ENCODE measurements at regions of chr13 and their contacts with region 1.

Region 1: DNA sequence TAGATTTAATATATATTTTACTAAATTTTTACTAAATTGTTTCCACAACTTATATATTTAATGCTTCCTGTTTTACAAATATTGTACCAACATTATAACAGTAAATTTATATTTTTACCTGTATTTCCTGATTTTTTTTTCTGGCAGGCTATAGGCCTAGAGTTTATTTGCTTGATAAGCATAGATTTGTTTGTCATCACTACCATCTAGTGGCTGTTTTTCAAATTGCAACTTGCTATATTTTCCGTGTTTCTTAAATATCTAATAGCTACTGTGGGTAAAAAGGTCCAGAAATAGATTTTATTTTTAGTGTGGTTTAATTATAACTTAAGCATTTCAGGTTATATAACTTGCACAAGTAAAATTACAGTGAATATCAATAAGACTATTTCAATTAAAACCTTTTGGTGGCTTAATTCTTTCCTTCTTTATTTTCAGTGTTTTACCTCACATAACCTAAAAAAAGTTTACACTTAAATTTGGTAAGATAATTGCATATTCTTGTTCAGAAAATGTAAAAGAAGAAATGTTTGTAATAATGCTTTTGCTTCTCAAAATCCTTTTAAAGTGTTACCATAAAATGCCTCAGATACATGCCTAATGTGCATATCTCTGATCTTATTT is 60.6 kb downstream of the NDFIP2 start:
- DNase-seq: peak in 7 of 9 donors; percentile 36 to 70 (median 59)
- ATAC-seq: peak; percentile 74
- H3K4me3 ChIP-seq: no peak overlapping the region
- H3K4me3 Mint-ChIP-seq: no peak overlapping the region
- H3K27ac ChIP-seq: no peak overlapping the region
- H3K27ac Mint-ChIP-seq: no peak overlapping the region
- H3K4me1 ChIP-seq: no peaks in the 10 kb centered on the region
- H3K4me1 Mint-ChIP-seq: peaks cover 0 to 20% (median 0%) of the 10 kb centered on the region in 7 donors
- H3K27me3 ChIP-seq: no peaks in the 10 kb centered on the region
- H3K27me3 Mint-ChIP-seq: no peaks in the 10 kb centered on the region

Region 2: DNA sequence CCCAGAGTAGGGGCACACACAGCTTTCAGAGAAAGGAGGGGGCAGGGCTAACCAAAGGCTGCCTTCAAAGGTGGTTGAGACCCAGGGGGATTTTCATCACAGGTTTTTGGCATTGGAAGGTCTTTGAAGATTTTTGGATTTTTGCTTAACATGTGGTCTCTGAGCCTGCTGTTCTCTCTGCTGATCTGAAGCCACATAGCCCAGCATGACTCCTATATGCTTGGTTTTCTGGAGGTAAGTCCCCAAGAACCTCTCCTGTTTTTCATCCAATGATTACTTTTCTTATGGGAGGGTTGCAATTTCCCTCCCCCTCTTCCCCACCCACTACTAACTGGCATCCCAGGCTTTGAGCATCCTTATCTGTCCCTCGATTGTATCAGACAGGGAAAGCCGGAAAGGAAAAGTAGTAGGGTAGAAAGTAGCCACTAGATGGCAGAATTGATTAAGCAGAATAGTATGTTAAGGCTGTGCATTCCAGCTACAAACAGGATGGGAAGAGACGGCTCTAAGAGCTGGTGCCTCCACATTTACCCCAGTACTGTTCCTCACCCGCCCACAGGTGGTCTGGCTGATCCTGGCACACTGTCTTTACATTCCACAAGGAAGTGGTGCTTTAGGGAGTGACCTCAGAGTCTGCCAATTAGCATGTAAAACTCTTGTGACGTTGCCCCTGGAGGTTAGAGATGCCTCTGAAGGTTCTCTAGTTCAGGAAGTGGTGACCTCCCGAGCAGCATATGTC is 1404.0 kb before region 1 on chr13:
- CTCF ChIA-PET with region 1: interaction called, 14 read pairs
- POLR2A ChIA-PET with region 1: no interaction called
- intact Hi-C with region 1: loop called in 1 of 2 experiments (anchors 1 kb)
- DNase-seq: peak in 7 of 9 donors; percentile 7 to 41 (median 28)
- ATAC-seq: peak; percentile 76
- H3K4me3 ChIP-seq: no peak overlapping the region
- H3K4me3 Mint-ChIP-seq: peak overlapping the region in 9 of 10 donors; percentile 11 to 67 (median 42)
- H3K27ac ChIP-seq: no peak overlapping the region
- H3K27ac Mint-ChIP-seq: no peak overlapping the region
- H3K4me1 ChIP-seq: no peaks in the 10 kb centered on the region
- H3K4me1 Mint-ChIP-seq: peaks cover 3 to 7% (median 6%) of the 10 kb centered on the region in 7 donors
- H3K27me3 ChIP-seq: no peaks in the 10 kb centered on the region
- H3K27me3 Mint-ChIP-seq: peaks cover 0 to 4% (median 0%) of the 10 kb centered on the region in 5 donors

Region 3: DNA sequence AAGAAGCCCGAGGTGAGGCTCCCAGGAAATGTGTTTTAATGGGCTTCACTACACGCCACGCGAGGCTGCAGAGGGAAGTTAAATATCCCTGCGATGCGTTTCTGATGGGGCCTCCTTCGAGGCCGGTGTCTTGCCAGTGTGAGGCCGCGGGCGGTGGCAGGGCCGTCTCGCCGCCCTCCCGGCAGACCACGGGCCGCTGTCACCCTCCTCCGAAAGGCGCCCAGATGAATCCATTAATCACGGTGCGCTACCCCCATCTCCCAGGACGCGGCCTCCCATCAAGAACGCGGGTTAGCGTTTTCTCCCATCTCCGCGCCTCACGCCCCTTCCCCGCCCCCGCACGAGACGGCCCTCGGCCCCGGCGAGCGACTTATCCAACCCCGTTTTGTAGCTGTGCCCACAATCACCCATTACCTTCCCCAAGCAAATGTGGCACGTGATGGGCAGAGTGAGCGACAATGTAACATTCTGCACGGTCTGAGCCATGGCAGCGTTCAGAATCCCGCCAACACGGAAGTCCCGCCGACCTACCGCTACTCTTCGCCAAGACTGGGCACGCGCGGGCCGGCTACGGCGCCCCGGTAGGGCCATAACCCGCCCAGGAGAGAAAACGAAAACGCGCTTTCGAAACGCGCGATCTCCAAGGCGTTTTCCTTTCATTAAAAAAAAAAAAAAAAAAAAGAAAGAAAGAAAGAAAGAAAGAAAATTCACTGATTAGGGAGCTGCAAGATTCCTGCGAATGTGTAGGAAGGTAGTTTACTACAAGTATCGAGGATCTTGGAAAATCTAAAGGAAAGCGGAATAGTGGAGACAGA is 882.7 kb before region 1 on chr13 and contains the start of gene OBI1:
- CTCF ChIA-PET with region 1: no interaction called
- POLR2A ChIA-PET with region 1: no interaction called
- intact Hi-C with region 1: loop called in 1 of 2 experiments (anchors 10 kb)
- DNase-seq: peak; percentile 84 to 94 (median 90)
- ATAC-seq: peak; percentile 99
- H3K4me3 ChIP-seq: peak within 1 kb of the TSS; percentile 94
- H3K4me3 Mint-ChIP-seq: peak within 1 kb of the TSS; percentile 91 to 100 (median 98)
- H3K27ac ChIP-seq: peak within 1 kb of the TSS; percentile 71
- H3K27ac Mint-ChIP-seq: peak within 1 kb of the TSS; percentile 91 to 98 (median 95)
- H3K4me1 ChIP-seq: peaks cover 10 to 11% of the 10 kb centered on the region in 2 donors
- H3K4me1 Mint-ChIP-seq: peaks cover 22 to 55% (median 47%) of the 10 kb centered on the region in 7 donors
- H3K27me3 ChIP-seq: no peaks in the 10 kb centered on the region
- H3K27me3 Mint-ChIP-seq: no peaks in the 10 kb centered on the region
- total RNA-seq, gene OBI1: 4.2 to 17.7 (median 15.9) TPM

Region 4: DNA sequence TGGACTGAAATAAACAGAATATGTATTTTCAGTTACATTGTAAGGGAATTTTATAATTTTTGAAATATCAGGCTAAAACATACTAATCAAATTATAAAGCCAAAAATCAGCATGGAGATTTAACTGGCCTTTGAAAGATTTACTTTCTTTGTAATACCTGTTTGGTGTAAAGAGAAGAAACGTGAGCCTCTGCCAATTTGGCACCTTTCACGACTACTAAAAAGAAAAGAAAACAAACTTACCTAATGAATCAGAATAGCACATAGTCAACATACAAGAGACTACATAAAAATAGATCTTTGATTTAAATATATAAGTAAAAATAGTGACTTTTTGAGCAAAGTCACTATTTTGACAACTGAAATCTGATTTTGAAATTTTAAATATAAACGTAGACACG is 222.9 kb before region 1 on chr13:
- CTCF ChIA-PET with region 1: no interaction called
- POLR2A ChIA-PET with region 1: no interaction called
- intact Hi-C with region 1: loop called in 1 of 2 experiments (anchors 1 kb)
- DNase-seq: no peak
- ATAC-seq: no peak
- H3K4me3 ChIP-seq: no peak overlapping the region
- H3K4me3 Mint-ChIP-seq: no peak overlapping the region
- H3K27ac ChIP-seq: no peak overlapping the region
- H3K27ac Mint-ChIP-seq: peak overlapping the region in 1 of 9 donors; percentile 35
- H3K4me1 ChIP-seq: no peaks in the 10 kb centered on the region
- H3K4me1 Mint-ChIP-seq: peaks cover 0 to 8% (median 4%) of the 10 kb centered on the region in 7 donors
- H3K27me3 ChIP-seq: no peaks in the 10 kb centered on the region
- H3K27me3 Mint-ChIP-seq: no peaks in the 10 kb centered on the region

Region 5: GRCh38 chr13:79405829-79406596 is 135.5 kb before region 1 on chr13 and contains the start of gene RBM26:
- CTCF ChIA-PET with region 1: interaction called, 3 read pairs
- POLR2A ChIA-PET with region 1: no interaction called
- intact Hi-C with region 1: loop called (anchors 1 kb)
- DNase-seq: peak; percentile 87 to 96 (median 93)
- ATAC-seq: peak; percentile 92
- H3K4me3 ChIP-seq: peak within 1 kb of the TSS; percentile 93
- H3K4me3 Mint-ChIP-seq: peak within 1 kb of the TSS in 5 of 10 donors; percentile 93 to 97 (median 95)
- H3K27ac ChIP-seq: peak within 1 kb of the TSS; percentile 91
- H3K27ac Mint-ChIP-seq: peak within 1 kb of the TSS in 5 of 9 donors; percentile 97 to 99 (median 99)
- H3K4me1 ChIP-seq: peaks cover 33 to 44% of the 10 kb centered on the region in 2 donors
- H3K4me1 Mint-ChIP-seq: peaks cover 31 to 49% (median 36%) of the 10 kb centered on the region in 7 donors
- H3K27me3 ChIP-seq: no peaks in the 10 kb centered on the region
- H3K27me3 Mint-ChIP-seq: no peaks in the 10 kb centered on the region
- total RNA-seq, gene RBM26: 75.4 to 136 (median 85.2) TPM

Region 6: DNA sequence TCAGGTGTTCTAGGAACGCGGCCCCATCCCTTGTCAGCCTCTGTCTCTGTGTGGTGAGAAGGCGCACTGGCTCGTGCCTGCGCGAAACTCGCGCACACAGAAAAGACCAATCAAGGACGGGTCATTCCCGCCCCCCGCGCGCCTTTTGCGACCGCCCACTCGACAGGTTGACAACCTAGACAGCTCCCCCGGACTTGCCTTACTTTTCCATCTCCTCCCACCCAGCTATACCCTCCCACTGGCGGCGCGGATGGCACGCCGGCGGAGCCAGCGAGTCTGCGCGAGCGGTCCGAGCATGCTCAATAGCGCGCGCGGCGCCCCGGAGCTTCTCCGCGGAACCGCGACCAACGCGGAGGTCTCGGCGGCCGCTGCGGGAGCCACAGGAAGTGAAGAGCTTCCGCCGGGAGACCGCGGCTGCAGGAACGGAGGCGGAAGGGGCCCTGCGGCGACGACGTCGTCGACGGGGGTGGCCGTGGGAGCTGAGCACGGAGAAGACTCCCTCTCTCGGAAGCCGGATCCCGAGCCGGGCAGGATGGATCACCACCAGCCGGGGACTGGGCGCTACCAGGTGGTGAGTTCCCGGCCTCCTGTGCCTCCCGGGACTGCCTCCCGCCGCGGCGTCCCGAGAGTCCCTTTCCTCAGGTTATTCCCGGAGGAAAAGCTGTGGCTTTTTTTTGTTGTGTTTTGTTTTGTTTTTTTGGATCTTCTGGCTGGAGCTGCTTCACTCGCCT is 60.4 kb before region 1 on chr13 and contains the start of gene NDFIP2:
- CTCF ChIA-PET with region 1: interaction called, 6 read pairs
- POLR2A ChIA-PET with region 1: interaction called, 3 read pairs
- intact Hi-C with region 1: loop called (anchors 1 to 2 kb)
- DNase-seq: peak; percentile 66 to 96 (median 78)
- ATAC-seq: peak; percentile 89
- H3K4me3 ChIP-seq: peak within 1 kb of the TSS; percentile 79
- H3K4me3 Mint-ChIP-seq: peak within 1 kb of the TSS; percentile 90 to 99 (median 92)
- H3K27ac ChIP-seq: peak within 1 kb of the TSS; percentile 28
- H3K27ac Mint-ChIP-seq: peak within 1 kb of the TSS; percentile 71 to 95 (median 90)
- H3K4me1 ChIP-seq: peaks cover 6 to 12% of the 10 kb centered on the region in 2 donors
- H3K4me1 Mint-ChIP-seq: peaks cover 24 to 66% (median 46%) of the 10 kb centered on the region in 7 donors
- H3K27me3 ChIP-seq: no peaks in the 10 kb centered on the region
- H3K27me3 Mint-ChIP-seq: peaks cover 0 to 7% (median 0%) of the 10 kb centered on the region in 5 donors
- total RNA-seq, gene NDFIP2: 2.6 to 123 (median 4.9) TPM

Region 7: GRCh38 chr13:79662882-79663281 is 121.3 kb after region 1 on chr13:
- CTCF ChIA-PET with region 1: no interaction called
- POLR2A ChIA-PET with region 1: no interaction called
- intact Hi-C with region 1: no loop called
- DNase-seq: no peak
- ATAC-seq: no peak
- H3K4me3 ChIP-seq: no peak overlapping the region
- H3K4me3 Mint-ChIP-seq: no peak overlapping the region
- H3K27ac ChIP-seq: no peak overlapping the region
- H3K27ac Mint-ChIP-seq: no peak overlapping the region
- H3K4me1 ChIP-seq: no peaks in the 10 kb centered on the region
- H3K4me1 Mint-ChIP-seq: peaks cover 0 to 2% (median 0%) of the 10 kb centered on the region in 7 donors
- H3K27me3 ChIP-seq: no peaks in the 10 kb centered on the region
- H3K27me3 Mint-ChIP-seq: peaks cover 0 to 18% (median 12%) of the 10 kb centered on the region in 5 donors